Activated CD4-positive, alpha-beta T cell treated with anti-CD3 and anti-CD28 coated beads, Interleukin-2, amount 10 ng/mL, durations not matched to agents 24 days and 14 days (primary cell): ENCODE measurements at regions of chr13 and their contacts with region 1.

Region 1: GRCh38 chr13:73058736-73059459 is at the start of gene KLF5:
- DNase-seq: peak; percentile 99
- H3K4me3 Mint-ChIP-seq: peak within 1 kb of the TSS; percentile 86
- H3K27ac Mint-ChIP-seq: peak within 1 kb of the TSS; percentile 83
- H3K4me1 Mint-ChIP-seq: peaks cover 20% of the 10 kb centered on the region
- H3K27me3 Mint-ChIP-seq: peaks cover 49% of the 10 kb centered on the region
- total RNA-seq, gene KLF5: 2.0 and 2.8 TPM in 2 replicates

Region 2: GRCh38 chr13:72727417-72728289 is 331.2 kb before region 1 on chr13 and contains the starts of genes BORA and MZT1:
- intact Hi-C with region 1: loop called (anchors 1 kb)
- DNase-seq: peak; percentile 99
- H3K4me3 Mint-ChIP-seq: peak within 1 kb of the TSS; percentile 96
- H3K27ac Mint-ChIP-seq: peak within 1 kb of the TSS; percentile 94
- H3K4me1 Mint-ChIP-seq: peaks cover 48% of the 10 kb centered on the region
- H3K27me3 Mint-ChIP-seq: no peaks in the 10 kb centered on the region
- total RNA-seq, gene BORA: 17.3 and 18.1 TPM in 2 replicates
- total RNA-seq, gene MZT1: 24.1 and 24.4 TPM in 2 replicates

Region 3: DNA sequence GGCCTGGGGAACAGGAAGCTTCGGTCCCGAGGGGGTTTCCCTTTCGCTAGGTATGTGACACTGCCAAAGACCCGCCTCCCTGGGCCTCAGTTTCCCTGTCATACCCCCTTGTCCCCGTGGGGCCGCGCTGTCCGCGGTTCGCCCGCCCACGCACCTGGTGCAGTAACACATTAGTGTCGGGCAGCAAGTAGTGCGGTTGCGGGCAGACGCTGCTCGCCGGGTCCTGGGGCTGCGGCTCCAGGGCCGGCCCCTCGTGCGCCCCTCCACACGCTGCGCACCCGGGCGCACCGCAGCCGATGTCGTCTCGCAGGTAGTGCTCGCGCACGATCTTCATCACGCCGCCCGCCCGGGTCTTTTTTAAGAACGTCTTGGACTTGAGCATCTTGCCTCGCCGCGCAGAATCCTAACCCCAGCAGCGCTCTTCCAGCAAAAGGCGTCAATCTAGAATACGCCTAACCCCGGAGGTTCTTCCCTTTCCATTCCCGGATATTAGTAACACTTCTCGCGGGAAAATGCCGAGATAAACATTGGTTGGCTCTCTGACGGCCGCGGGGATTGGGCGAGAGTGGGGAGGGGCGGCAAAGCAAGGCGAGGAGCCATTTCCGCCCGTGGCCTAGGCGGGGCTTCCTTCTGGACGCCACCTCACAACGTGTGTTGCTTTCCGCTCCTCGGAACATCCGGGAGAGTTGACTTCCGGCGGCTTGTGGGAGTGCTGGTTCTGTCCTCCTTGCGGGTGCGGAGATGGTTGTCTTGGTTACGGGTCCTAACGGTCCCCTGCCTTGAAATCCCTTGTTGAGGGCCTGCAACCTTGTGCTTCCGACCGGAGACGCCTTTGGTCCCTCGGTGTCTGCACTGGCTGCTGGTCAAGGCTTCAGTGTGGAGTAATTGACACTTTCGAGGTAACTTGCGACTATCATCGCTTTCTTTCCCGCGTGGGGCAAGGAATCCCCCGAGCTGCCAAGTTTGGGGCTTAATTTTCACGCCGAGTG is 277.2 kb before region 1 on chr13 and contains the starts of genes DIS3 and PIBF1:
- intact Hi-C with region 1: loop called (anchors 1 kb)
- DNase-seq: peak; percentile 99
- H3K4me3 Mint-ChIP-seq: peak within 1 kb of the TSS; percentile 97
- H3K27ac Mint-ChIP-seq: peak within 1 kb of the TSS; percentile 98
- H3K4me1 Mint-ChIP-seq: peaks cover 43% of the 10 kb centered on the region
- H3K27me3 Mint-ChIP-seq: no peaks in the 10 kb centered on the region
- total RNA-seq, gene DIS3: 52.1 and 55.6 TPM in 2 replicates
- total RNA-seq, gene PIBF1: 25.0 and 33.7 TPM in 2 replicates

Region 4: GRCh38 chr13:72839831-72840426 is 219.0 kb before region 1 on chr13:
- intact Hi-C with region 1: loop called (anchors 2 kb)
- DNase-seq: peak; percentile 79
- H3K4me3 Mint-ChIP-seq: no peak overlapping the region
- H3K27ac Mint-ChIP-seq: no peak overlapping the region
- H3K4me1 Mint-ChIP-seq: peaks cover 4% of the 10 kb centered on the region
- H3K27me3 Mint-ChIP-seq: no peaks in the 10 kb centered on the region

Region 5: GRCh38 chr13:73286976-73287674 is 228.2 kb after region 1 on chr13:
- intact Hi-C with region 1: no loop called
- DNase-seq: no peak
- H3K4me3 Mint-ChIP-seq: no peak overlapping the region
- H3K27ac Mint-ChIP-seq: no peak overlapping the region
- H3K4me1 Mint-ChIP-seq: no peaks in the 10 kb centered on the region
- H3K27me3 Mint-ChIP-seq: peaks cover 12% of the 10 kb centered on the region